Heart right ventricle (tissue), 16 donors: ENCODE measurements at regions of chr7 and their contacts with region 1.

Region 1: DNA sequence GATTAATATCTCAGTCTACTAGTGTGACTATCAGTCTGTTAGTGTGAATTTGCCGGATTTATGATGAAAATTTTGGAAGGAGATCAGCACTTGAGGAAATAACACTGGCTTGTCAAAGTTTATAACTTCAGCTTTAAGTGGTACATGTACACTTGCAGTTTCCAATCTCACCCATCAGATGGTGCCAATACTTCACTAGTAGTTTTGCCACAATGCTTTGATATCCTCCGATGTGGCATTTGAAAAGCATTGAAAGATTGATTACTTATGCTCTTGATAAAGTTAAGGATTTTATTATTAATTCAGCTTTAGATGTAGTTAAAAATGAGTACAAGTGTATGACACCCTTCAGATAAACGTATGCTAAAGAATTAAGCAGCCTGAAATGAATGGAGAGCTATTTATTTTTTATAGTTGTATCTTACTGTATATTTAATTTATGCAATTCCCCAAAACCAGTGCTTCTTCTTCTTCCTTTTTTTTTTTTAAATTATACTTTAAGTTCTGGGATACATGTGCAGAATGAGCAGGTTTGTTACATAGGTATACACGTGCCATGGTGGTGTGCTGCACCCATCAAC is 98.2 kb downstream of the ANLN start:
- DNase-seq: no peak
- ATAC-seq: peak in 1 of 8 donors; percentile 59
- H3K4me3 ChIP-seq: no peak overlapping the region
- H3K27ac ChIP-seq: no peak overlapping the region
- H3K4me1 ChIP-seq: no peaks in the 10 kb centered on the region
- H3K27me3 ChIP-seq: peaks cover 0 to 5% (median 0%) of the 10 kb centered on the region in 7 donors
- CTCF ChIP-seq: peak in 8 of 9 donors; percentile 30 to 75 (median 68)

Region 2: DNA sequence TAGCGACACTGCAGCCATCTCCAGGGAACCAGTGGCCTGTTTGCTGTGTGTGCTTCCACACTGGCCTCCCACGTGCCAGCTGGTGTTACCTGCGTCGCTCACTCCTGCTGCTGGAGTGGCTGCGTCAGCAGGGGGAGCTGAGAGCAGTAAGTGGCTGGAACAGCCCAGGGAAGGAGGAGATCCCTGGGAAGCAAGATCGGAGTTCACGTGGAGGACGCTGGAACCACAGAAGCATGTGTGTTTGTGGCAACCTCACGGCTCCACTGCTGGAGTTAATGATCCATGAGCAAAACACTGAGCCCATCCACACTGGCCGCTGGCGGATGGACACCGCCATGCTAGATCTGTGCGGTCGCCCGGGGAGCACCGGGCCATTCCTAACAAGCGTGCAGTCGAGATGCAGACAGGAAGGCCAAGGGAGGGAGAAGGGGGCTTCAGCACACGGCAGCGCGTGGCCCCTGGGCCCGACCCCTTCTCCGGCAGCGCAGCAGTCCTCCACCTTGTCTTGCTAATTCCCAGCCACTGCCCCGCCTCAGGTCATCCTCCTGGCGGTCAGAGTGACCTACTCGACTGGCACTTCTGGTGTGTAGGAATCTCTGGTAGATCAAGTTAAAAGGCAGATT is 403.3 kb before region 1 on chr7:
- intact Hi-C with region 1: no loop called
- DNase-seq: peak; percentile 32 to 35
- ATAC-seq: peak in 7 of 8 donors; percentile 42 to 88 (median 67)
- H3K4me3 ChIP-seq: no peak overlapping the region
- H3K27ac ChIP-seq: no peak overlapping the region
- H3K4me1 ChIP-seq: peaks cover 0 to 23% (median 10%) of the 10 kb centered on the region in 9 donors
- H3K27me3 ChIP-seq: no peaks in the 10 kb centered on the region
- CTCF ChIP-seq: peak in 8 of 9 donors; percentile 17 to 47 (median 30)

Region 3: DNA sequence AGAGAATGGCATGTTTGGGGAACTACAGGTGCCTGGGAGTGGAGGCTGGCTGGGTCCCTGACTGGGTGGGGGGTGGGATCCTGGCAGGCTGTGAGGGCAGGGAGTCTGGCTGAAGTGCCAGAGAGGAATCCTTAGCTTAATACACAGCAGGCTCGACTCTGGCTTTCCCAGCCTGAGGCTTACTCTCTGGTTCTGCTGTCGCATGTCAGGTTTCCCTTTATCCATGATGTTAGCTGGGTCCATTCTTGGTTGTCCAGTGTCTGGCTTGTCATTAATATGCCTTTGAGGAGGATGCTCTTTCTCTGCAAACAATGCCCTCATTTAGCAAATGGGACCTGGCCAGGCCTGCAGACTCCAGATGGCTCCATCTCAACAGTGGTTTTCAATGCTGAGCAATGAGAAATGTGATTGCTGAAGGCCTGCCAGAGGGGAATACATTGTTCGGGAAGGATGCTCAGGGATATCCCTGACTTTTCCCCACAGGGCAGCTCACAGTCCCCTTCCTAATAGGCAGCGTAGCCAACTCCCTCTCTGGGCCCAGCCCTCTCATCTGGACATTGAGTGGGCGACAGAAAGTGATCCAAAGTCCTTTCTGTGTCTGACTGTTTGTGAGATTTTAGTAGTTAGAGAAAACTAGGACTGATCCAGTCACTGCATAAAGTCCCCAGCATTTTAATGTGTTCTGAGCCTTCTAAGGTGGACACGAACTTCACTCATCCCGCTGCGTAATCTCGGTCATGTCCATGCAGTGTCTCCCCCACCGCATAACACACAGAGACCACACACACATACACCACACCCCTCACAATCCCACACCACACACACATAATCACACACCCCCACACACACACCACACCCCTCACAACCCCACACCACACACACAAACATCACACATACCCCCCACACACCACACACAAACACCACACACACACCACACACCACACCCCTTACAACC is 26.7 kb after region 1 on chr7:
- intact Hi-C with region 1: no loop called
- DNase-seq: no peak
- ATAC-seq: no peak
- H3K4me3 ChIP-seq: no peak overlapping the region
- H3K27ac ChIP-seq: no peak overlapping the region
- H3K4me1 ChIP-seq: no peaks in the 10 kb centered on the region
- H3K27me3 ChIP-seq: peaks cover 0 to 3% (median 0%) of the 10 kb centered on the region in 7 donors
- CTCF ChIP-seq: no peak

Region 4: GRCh38 chr7:36661135-36661840 is 173.4 kb after region 1 on chr7:
- intact Hi-C with region 1: loop called in 4 of 10 experiments (anchors 5 to 10 kb)
- DNase-seq: no peak
- ATAC-seq: no peak
- H3K4me3 ChIP-seq: no peak overlapping the region
- H3K27ac ChIP-seq: no peak overlapping the region
- H3K4me1 ChIP-seq: peaks cover 0 to 22% (median 3%) of the 10 kb centered on the region in 9 donors
- H3K27me3 ChIP-seq: no peaks in the 10 kb centered on the region
- CTCF ChIP-seq: no peak

Region 5: GRCh38 chr7:36670585-36671431 is 183.0 kb after region 1 on chr7:
- intact Hi-C with region 1: loop called in 9 of 10 experiments (anchors 5 to 10 kb)
- DNase-seq: peak in 1 of 2 donors; percentile 27
- ATAC-seq: peak in 4 of 8 donors; percentile 56 to 71 (median 61)
- H3K4me3 ChIP-seq: no peak overlapping the region
- H3K27ac ChIP-seq: no peak overlapping the region
- H3K4me1 ChIP-seq: no peaks in the 10 kb centered on the region
- H3K27me3 ChIP-seq: peaks cover 0 to 3% (median 0%) of the 10 kb centered on the region in 7 donors
- CTCF ChIP-seq: peak; percentile 49 to 87 (median 77)

Region 6: DNA sequence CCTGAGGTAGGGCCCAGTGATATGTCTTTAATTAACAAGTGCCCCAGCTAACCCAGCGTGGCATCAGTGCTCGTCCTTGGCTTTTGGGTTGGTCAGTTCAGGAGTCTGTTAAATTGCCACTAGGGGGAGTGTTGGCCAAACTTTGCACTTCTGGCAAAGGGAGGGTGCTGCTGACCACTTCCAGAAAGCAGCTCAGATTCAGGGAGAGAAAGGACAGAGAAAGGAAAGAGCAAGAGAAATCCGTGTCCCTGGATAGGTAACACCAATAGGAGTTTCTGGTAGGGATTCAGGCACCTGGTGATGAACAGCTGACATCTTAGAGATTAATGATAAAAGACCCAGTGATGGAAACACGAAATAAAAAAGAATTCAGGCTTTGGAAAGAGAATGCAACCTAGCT is 479.5 kb after region 1 on chr7:
- intact Hi-C with region 1: loop called in 2 of 10 experiments (anchors 5 to 10 kb)
- DNase-seq: peak; percentile 20 to 74
- ATAC-seq: peak; percentile 85 to 98 (median 94)
- H3K4me3 ChIP-seq: no peak overlapping the region
- H3K27ac ChIP-seq: peak overlapping the region in 1 of 10 donors; percentile 49
- H3K4me1 ChIP-seq: peaks cover 0 to 45% (median 21%) of the 10 kb centered on the region in 9 donors
- H3K27me3 ChIP-seq: no peaks in the 10 kb centered on the region
- CTCF ChIP-seq: peak; percentile 59 to 89 (median 80)